ENCODE measurements at regions of chr11 and their contacts with region 1.

Region 1: DNA sequence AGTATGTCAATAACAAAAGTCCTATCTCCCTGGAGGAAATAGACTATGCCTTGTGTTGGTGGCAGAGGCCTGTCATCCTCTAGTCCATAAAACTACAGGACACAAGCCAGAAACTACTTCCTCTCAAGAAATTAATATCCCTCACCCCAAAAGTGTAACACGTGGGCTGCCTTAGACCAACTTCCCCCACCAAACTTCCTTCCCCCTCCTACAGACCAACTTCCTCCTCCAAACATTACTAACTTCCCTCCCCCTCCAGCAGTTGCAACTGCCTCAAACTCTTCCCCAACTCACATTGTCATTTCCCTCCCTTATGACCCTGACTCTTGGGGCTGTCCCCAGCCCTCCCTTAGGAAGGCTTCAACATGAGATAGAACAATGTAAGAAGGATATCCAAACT is 6.3 kb downstream of the OR52K2 start:
- H3K4me3 Mint-ChIP-seq: no peak overlapping the region
- H3K27ac Mint-ChIP-seq: peak overlapping the region; percentile 43
- H3K4me1 Mint-ChIP-seq: peaks cover 80% of the 10 kb centered on the region
- H3K27me3 Mint-ChIP-seq: no peaks in the 10 kb centered on the region

Region 2: DNA sequence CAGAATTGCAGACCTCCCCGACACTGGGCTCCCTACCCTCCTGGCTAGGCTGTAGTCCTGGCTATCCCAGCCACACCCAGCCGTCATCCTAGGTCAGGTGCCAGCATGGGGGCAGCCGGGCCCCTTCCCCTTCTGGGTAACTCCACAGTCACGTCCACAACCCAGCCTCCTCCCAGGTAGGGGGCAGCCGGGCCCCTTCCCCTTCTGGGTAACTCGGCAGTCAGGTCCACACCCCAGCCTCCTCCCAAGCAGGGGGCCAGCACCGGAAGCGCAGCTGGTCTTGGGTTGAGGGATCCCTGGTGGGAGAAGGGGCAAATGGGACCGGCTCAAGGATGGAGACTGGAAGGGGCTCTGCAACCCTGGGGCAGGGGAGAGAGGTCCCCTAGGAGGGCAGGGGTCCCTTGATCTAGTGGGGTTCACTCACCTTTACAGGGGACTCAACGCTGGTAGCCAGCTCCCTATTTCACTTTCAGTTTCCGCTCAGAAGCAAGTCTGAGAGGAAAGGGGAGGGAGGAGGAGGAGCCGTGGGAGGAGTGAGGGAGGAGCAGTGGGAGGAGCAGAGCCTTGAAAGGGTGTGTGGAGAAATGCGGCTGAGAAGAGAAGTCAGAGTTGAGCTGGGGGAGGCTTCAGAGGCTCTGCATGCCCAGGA is 62.1 kb before region 1 on chr11 and contains the start of gene TRIM21:
- intact Hi-C with region 1: loop called (anchors 2 kb)
- H3K4me3 Mint-ChIP-seq: peak within 1 kb of the TSS; percentile 91
- H3K27ac Mint-ChIP-seq: peak within 1 kb of the TSS; percentile 95
- H3K4me1 Mint-ChIP-seq: peaks cover 49% of the 10 kb centered on the region
- H3K27me3 Mint-ChIP-seq: no peaks in the 10 kb centered on the region